CD4-positive, alpha-beta memory T cell (primary cell): ENCODE measurements at regions of chr3 and their contacts with region 1.

Region 1: DNA sequence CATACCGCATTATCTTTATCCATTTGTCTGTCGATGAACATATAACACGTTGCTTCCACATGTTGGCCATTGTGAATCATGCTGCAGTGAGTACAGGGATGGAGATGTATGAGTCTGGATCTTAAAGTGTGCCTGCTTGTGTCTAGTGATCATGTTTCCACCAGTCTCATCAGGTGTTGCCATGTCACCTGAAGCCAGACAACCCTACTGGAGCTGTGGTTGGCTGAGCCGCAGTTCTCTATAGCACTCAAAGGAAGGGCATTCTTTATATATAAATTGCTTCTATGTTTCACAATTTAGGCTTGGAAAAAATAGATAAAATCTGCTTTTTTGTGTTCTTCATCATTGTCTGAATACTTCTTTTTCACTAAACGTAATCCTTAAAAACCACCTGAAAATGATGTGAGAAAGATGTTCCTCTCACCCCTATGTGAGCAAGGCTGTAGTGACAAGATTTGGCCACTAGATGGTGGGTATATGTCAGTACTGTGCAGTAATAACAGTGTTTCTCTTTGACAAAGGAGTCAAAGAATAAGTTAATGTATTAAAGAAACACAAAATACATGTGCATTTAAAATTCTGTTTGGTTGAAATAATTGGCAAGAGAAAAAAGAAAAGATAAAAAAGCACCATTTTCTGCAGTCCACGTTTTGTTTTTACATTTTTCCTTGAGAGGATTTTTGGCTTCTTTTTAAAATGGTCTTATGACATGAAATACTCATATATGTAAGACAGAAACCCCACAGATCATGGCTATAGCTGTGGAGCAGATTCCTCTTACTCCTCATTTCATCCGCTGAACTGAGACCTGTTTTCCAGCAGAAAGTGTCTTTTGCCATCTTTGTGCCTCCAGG is 394.5 kb upstream of the DPPA4 start:
- DNase-seq: peak; percentile 58 to 66 (median 62)
- H3K4me3 ChIP-seq: no peak overlapping the region
- H3K4me3 Mint-ChIP-seq: no peak overlapping the region
- H3K27ac ChIP-seq: no peak overlapping the region
- H3K27ac Mint-ChIP-seq: no peak overlapping the region
- H3K4me1 ChIP-seq: peaks cover 9% of the 10 kb centered on the region
- H3K4me1 Mint-ChIP-seq: peaks cover 5 to 12% (median 10%) of the 10 kb centered on the region in 4 donors
- H3K27me3 ChIP-seq: no peaks in the 10 kb centered on the region
- H3K27me3 Mint-ChIP-seq: no peaks in the 10 kb centered on the region

Region 2: DNA sequence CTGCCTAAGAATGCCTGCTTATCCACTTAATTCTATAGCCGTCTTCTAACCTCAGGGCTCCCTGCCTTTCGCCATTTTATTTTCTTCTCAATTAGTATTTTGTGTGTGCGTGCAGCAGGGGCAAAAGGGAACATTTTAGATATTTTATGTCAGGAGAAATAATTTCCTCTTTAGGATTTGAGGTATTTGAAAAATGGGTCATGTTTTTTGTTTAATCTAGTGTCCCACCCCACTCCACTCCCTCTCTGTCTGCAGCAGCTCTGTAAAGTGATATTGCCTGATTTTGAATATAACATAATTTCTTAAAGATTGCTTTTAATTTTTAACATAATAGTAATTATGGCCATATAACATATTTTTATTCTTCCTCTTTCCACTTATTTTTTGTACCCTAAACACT is 198.7 kb after region 1 on chr3:
- CTCF ChIA-PET with region 1: no interaction called
- POLR2A ChIA-PET with region 1: no interaction called
- intact Hi-C with region 1: loop called (anchors 10 kb)
- DNase-seq: no peak
- H3K4me3 ChIP-seq: no peak overlapping the region
- H3K4me3 Mint-ChIP-seq: no peak overlapping the region
- H3K27ac ChIP-seq: no peak overlapping the region
- H3K27ac Mint-ChIP-seq: no peak overlapping the region
- H3K4me1 ChIP-seq: no peaks in the 10 kb centered on the region
- H3K4me1 Mint-ChIP-seq: no peaks in the 10 kb centered on the region
- H3K27me3 ChIP-seq: no peaks in the 10 kb centered on the region
- H3K27me3 Mint-ChIP-seq: no peaks in the 10 kb centered on the region

Region 3: DNA sequence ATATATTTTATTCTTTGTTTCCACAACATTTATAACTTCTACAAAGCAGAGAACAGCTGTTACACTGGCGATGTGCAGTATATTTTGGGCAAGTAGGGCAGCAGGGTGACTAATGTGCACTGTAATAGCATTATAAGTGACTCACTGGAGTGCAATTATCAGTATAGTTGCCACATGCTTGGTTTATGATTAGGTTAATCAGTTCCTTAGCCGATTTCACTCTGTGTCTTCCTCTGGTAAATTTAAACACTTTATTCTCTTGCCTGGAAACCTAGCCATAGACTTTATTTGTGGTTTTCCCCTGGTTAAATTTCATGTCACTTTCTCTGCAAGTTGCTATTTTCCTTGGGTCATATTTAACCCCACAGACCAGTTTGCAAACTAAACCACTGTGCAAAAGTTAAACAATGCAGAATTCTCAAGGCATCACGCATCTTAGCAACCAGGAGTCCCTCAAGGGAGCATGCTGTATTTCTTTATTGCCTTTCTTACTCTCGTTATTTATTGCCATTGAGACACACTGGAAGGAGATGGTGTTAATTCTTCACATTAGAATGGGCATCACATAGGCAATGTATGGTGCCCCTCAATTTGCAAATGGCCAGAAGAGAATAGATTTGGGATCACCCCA is 295.7 kb after region 1 on chr3:
- CTCF ChIA-PET with region 1: no interaction called
- POLR2A ChIA-PET with region 1: no interaction called
- intact Hi-C with region 1: loop called (anchors 5 kb)
- DNase-seq: no peak
- H3K4me3 ChIP-seq: no peak overlapping the region
- H3K4me3 Mint-ChIP-seq: no peak overlapping the region
- H3K27ac ChIP-seq: no peak overlapping the region
- H3K27ac Mint-ChIP-seq: no peak overlapping the region
- H3K4me1 ChIP-seq: no peaks in the 10 kb centered on the region
- H3K4me1 Mint-ChIP-seq: peaks cover 0 to 5% (median 1%) of the 10 kb centered on the region in 4 donors
- H3K27me3 ChIP-seq: no peaks in the 10 kb centered on the region
- H3K27me3 Mint-ChIP-seq: no peaks in the 10 kb centered on the region

Region 4: GRCh38 chr3:111080413-111080812 is 1348.6 kb after region 1 on chr3:
- CTCF ChIA-PET with region 1: interaction called, 4 read pairs
- POLR2A ChIA-PET with region 1: no interaction called
- intact Hi-C with region 1: loop called (anchors 2 kb)
- DNase-seq: no peak
- H3K4me3 ChIP-seq: no peak overlapping the region
- H3K4me3 Mint-ChIP-seq: no peak overlapping the region
- H3K27ac ChIP-seq: no peak overlapping the region
- H3K27ac Mint-ChIP-seq: no peak overlapping the region
- H3K4me1 ChIP-seq: no peaks in the 10 kb centered on the region
- H3K4me1 Mint-ChIP-seq: peaks cover under 1 to 8% (median 3%) of the 10 kb centered on the region in 4 donors
- H3K27me3 ChIP-seq: no peaks in the 10 kb centered on the region
- H3K27me3 Mint-ChIP-seq: no peaks in the 10 kb centered on the region